ENCODE measurements at regions of chr12 and their contacts with region 1.

Region 1: GRCh38 chr12:19893514-19893913 is 454.2 kb downstream of the AEBP2 start:
- DNase-seq: no peak
- H3K4me3 Mint-ChIP-seq: no peak overlapping the region
- H3K27ac Mint-ChIP-seq: no peak overlapping the region
- H3K4me1 Mint-ChIP-seq: peaks cover 16% of the 10 kb centered on the region
- H3K27me3 Mint-ChIP-seq: no peaks in the 10 kb centered on the region
- CTCF ChIP-seq: no peak

Region 2: DNA sequence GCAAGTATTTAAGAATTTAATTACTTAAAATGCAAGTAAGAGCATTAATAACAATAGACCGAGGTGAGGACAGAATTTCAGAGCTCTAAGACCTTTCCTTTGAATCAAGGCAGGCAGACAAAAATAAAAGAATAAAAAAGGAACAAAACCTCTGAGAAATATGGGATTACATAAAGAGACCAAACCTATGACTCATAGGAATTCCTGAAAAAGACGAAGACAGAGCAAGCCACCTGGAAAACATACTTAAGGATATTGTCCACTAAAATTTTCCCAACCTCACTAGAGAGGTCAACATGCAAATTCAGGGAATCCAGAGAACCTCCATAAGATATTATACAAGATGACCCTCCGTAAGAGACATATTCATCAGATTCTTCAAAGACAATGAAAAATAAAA is 129.1 kb before region 1 on chr12:
- CTCF ChIA-PET with region 1: no interaction called
- intact Hi-C with region 1: no loop called
- DNase-seq: no peak
- H3K4me3 Mint-ChIP-seq: no peak overlapping the region
- H3K27ac Mint-ChIP-seq: no peak overlapping the region
- H3K4me1 Mint-ChIP-seq: peaks cover 5% of the 10 kb centered on the region
- H3K27me3 Mint-ChIP-seq: no peaks in the 10 kb centered on the region
- CTCF ChIP-seq: no peak

Region 3: GRCh38 chr12:19779393-19780056 is 114.0 kb before region 1 on chr12:
- CTCF ChIA-PET with region 1: interaction called, 13 read pairs
- intact Hi-C with region 1: no loop called
- DNase-seq: no peak
- H3K4me3 Mint-ChIP-seq: no peak overlapping the region
- H3K27ac Mint-ChIP-seq: no peak overlapping the region
- H3K4me1 Mint-ChIP-seq: peaks cover 32% of the 10 kb centered on the region
- H3K27me3 Mint-ChIP-seq: no peaks in the 10 kb centered on the region
- CTCF ChIP-seq: no peak

Measured in Calu3 (cell line).